SK-N-SH (cell line): ENCODE measurements at regions of chr7 and their contacts with region 1.

Region 1: DNA sequence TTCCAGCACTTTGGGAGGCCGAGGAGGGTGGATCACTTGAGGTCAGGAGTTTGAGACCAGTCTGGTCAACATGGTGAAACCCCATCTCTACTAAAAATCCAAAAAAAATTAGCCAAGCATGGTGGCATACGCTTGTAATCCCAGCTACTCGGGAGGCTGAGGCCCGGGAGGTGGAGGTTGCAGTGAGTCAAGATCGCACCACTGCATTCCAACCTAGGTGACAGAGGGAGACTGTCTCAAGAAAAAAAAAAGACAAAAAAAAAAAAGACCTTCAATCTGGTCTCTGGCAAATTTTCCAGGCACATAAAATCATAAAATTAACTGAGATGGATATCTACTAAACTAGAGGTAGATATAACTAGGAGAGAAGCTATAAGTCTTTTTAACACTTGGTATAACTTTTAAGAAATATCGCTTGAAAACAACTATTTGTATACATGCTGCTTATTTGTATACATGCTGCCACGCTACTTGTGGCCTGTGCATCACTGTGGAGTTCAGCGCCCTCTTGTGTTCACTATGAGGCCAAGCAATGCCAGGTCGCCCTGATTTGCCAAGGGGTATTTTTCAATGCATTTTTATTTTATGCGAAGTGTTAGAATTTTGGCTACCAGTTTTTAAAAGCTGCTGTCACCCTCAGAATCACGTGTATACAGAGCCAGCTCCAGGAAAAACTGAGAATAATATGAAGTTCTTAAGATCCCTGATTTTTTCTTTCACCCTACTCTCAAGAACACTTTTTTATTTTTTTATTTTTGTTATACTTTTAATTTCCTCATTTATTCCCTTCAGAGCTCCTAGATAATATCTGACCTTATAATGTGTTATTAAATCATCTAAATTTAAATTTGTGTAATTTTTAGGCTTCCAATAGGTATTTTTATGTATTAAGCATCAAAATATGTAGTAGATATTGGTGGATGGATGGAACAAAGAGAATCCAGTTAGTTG is 26.7 kb downstream of the CYCS start:
- DNase-seq: peak; percentile 80
- H3K4me3 ChIP-seq: peak overlapping the region in 1 of 2 experiments; percentile 16; a peak in 1 of 4 replicates
- H3K27ac ChIP-seq: no peak overlapping the region
- H3K4me1 ChIP-seq: peaks cover 0 to 3% of the 10 kb centered on the region in 2 experiments; a peak in 1 of 4 replicates
- H3K27me3 ChIP-seq: no peaks in the 10 kb centered on the region
- CTCF ChIP-seq: peak; percentile 100
- EP300 ChIP-seq: no peak
- RAD21 ChIP-seq: peak; percentile 90

Region 2: GRCh38 chr7:24800667-24801066 is 297.7 kb before region 1 on chr7:
- CTCF ChIA-PET with region 1: interaction called, 396 read pairs
- POLR2A ChIA-PET with region 1: no interaction called
- DNase-seq: no peak
- H3K4me3 ChIP-seq: no peak overlapping the region
- H3K27ac ChIP-seq: no peak overlapping the region
- H3K4me1 ChIP-seq: no peaks in the 10 kb centered on the region
- H3K27me3 ChIP-seq: no peaks in the 10 kb centered on the region
- CTCF ChIP-seq: no peak
- EP300 ChIP-seq: no peak
- RAD21 ChIP-seq: no peak

Region 3: DNA sequence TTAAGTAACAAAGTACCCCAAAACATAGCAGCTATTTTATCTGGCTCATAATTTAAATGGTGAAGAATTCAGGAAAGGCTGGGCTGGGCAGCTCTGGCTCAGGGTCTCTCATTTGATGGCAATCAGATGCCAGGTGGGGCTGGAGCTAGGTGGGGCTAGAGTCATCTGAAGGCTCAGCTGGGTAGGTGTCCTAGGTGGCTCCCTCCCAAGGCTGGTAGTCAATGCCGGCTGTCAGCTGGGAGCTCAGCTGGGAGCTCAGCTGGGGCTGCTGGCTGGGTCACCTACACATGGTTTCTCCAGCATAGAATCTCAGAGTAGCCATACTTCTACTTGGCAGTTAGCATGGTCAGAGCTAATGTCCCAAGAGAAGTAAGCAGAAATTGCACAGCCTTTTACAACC is 152.5 kb before region 1 on chr7:
- CTCF ChIA-PET with region 1: interaction called, 10 read pairs
- POLR2A ChIA-PET with region 1: no interaction called
- DNase-seq: no peak
- H3K4me3 ChIP-seq: no peak overlapping the region
- H3K27ac ChIP-seq: no peak overlapping the region
- H3K4me1 ChIP-seq: peaks cover 8 to 25% of the 10 kb centered on the region in 2 experiments; a peak in 3 of 4 replicates
- H3K27me3 ChIP-seq: no peaks in the 10 kb centered on the region
- CTCF ChIP-seq: no peak
- EP300 ChIP-seq: no peak
- RAD21 ChIP-seq: no peak

Region 4: GRCh38 chr7:25060487-25061055 is 37.8 kb before region 1 on chr7:
- CTCF ChIA-PET with region 1: interaction called, 29 read pairs
- POLR2A ChIA-PET with region 1: no interaction called
- DNase-seq: no peak
- H3K4me3 ChIP-seq: no peak overlapping the region
- H3K27ac ChIP-seq: no peak overlapping the region
- H3K4me1 ChIP-seq: peaks cover 0 to 6% of the 10 kb centered on the region in 2 experiments; a peak in 1 of 4 replicates
- H3K27me3 ChIP-seq: no peaks in the 10 kb centered on the region
- CTCF ChIP-seq: no peak
- EP300 ChIP-seq: no peak
- RAD21 ChIP-seq: no peak

Region 5: GRCh38 chr7:25087855-25088254 is 10.5 kb before region 1 on chr7:
- CTCF ChIA-PET with region 1: interaction called, 115 read pairs
- POLR2A ChIA-PET with region 1: no interaction called
- DNase-seq: no peak
- H3K4me3 ChIP-seq: no peak overlapping the region
- H3K27ac ChIP-seq: no peak overlapping the region
- H3K4me1 ChIP-seq: peaks cover 0 to 3% of the 10 kb centered on the region in 2 experiments; a peak in 1 of 4 replicates
- H3K27me3 ChIP-seq: no peaks in the 10 kb centered on the region
- CTCF ChIP-seq: no peak
- EP300 ChIP-seq: no peak
- RAD21 ChIP-seq: no peak

Region 6: GRCh38 chr7:25125137-25125946 is 27.0 kb after region 1 on chr7 and contains the start of gene CYCS:
- CTCF ChIA-PET with region 1: interaction called, 68 read pairs
- POLR2A ChIA-PET with region 1: interaction called, 8 read pairs
- DNase-seq: peak; percentile 95
- H3K4me3 ChIP-seq: peak within 1 kb of the TSS; percentile 77 to 88
- H3K27ac ChIP-seq: peak within 1 kb of the TSS; percentile 73 to 93
- H3K4me1 ChIP-seq: peaks cover 12 to 16% of the 10 kb centered on the region in 2 experiments
- H3K27me3 ChIP-seq: no peaks in the 10 kb centered on the region
- CTCF ChIP-seq: no peak
- EP300 ChIP-seq: no peak
- RAD21 ChIP-seq: no peak
- polyA plus RNA-seq, gene CYCS: 22.9 and 23.8 TPM in 2 replicates

Region 7: DNA sequence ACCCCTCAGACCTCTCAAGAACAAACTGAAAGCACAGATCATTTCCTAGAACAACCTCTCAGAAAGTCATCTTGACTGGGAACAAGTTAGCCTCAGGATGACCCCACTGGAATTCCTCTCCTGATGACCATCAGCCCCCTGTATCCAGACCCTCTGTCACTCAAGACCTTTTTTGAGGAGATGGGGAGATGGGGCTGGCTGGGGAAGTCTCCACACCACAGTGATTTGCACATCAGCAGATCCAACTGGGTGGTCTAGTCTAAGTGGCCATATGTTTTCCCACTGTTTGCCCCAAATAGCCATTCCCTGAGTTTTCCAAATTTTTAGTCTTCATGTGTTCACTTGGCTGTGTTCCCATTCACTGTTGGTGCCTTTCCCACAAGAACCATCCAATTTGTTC is 582.3 kb after region 1 on chr7:
- CTCF ChIA-PET with region 1: no interaction called
- POLR2A ChIA-PET with region 1: no interaction called
- DNase-seq: no peak
- H3K4me3 ChIP-seq: no peak overlapping the region
- H3K27ac ChIP-seq: no peak overlapping the region
- H3K4me1 ChIP-seq: peaks cover 0 to 4% of the 10 kb centered on the region in 2 experiments; a peak in 2 of 4 replicates
- H3K27me3 ChIP-seq: no peaks in the 10 kb centered on the region
- CTCF ChIP-seq: no peak
- EP300 ChIP-seq: no peak
- RAD21 ChIP-seq: no peak